Activated CD8-positive, alpha-beta T cell treated with anti-CD3 and anti-CD28 coated beads, Interleukin-2, amount 10 ng/mL, durations not matched to agents 7 days and 5 days (primary cell): ENCODE measurements at regions of chr7 and their contacts with region 1.

Region 1: DNA sequence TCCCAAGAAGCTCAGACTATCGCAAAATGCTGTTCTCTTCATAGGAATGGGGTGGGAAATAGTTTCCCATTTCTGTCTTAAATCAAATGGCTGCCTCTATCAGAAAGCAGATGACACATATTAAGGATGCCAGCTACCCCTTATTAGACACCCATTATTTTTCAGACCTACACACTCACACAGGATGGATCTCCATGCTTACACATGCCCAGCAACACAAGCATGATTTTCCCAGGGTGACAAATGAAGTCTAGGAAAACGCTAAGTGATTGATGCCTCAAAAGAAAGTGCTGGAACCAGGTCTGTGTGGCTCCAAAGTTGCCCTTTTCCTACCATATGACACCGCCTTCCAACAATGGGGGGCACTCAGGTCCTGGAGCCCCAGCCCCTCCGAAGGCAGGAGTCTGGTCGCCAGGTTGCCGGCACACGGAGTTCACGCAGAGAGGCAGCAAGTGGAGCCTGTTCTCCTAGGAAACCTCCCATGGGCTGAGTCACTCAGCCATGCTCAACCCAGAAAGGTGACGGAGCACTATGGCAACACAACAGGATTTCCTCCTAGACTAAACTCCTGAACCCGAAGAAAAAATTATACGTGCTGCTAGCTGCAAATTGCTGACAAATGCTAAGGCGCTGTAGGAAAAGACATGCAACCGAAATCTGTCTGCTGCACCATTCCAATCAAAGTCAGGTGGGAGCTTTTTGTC is 19.8 kb downstream of the VOPP1 start:
- DNase-seq: no peak
- ATAC-seq: no peak
- H3K4me3 Mint-ChIP-seq: no peak overlapping the region
- H3K27ac Mint-ChIP-seq: no peak overlapping the region
- H3K4me1 Mint-ChIP-seq: peaks cover 43% of the 10 kb centered on the region
- H3K27me3 Mint-ChIP-seq: no peaks in the 10 kb centered on the region

Region 2: DNA sequence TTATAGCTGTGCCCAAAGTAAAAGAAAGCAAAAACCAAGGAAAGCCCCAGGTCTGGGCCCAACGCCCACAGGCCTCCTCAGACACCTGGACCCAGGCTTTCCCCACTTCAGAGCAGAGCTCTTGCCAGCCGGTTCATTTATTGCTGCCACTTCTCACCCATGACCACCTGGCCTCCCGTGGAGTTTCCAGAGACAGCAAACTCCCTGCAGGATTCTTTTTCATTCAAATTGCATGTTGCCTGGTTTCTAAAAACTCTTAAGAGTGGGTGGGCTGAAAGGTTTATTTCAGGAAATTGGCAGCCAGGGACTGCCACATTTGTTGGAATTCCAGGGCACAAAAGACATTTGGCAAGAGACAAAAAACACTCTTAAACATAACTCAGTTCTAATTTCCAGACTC is 15.1 kb after region 1 on chr7:
- CTCF ChIA-PET with region 1: interaction called, 15 read pairs
- POLR2A ChIA-PET with region 1: interaction called, 4 read pairs
- DNase-seq: no peak
- ATAC-seq: no peak
- H3K4me3 Mint-ChIP-seq: no peak overlapping the region
- H3K27ac Mint-ChIP-seq: no peak overlapping the region
- H3K4me1 Mint-ChIP-seq: peaks cover 60% of the 10 kb centered on the region
- H3K27me3 Mint-ChIP-seq: no peaks in the 10 kb centered on the region

Region 3: DNA sequence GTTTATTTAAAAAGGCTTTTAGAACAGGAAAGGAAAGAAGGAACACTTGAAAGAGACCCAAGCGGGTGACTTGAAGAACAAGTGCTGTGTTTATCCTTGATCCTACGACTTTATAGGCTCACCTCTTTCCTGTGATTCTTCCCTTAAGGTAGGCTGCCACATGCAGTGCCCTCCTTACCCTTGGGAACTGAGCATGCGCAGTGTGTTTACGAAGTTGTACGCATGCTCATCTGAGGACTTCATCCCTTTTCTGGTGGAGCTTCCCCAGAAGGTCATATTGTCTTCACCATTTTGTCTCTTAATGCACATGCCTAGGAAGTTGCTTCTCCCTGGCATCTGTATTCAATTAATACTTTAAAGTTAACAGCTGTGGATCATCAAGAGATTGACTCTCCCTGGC is 69.8 kb after region 1 on chr7:
- CTCF ChIA-PET with region 1: no interaction called
- POLR2A ChIA-PET with region 1: no interaction called
- DNase-seq: no peak
- ATAC-seq: no peak
- H3K4me3 Mint-ChIP-seq: no peak overlapping the region
- H3K27ac Mint-ChIP-seq: no peak overlapping the region
- H3K4me1 Mint-ChIP-seq: no peaks in the 10 kb centered on the region
- H3K27me3 Mint-ChIP-seq: peaks cover 3% of the 10 kb centered on the region